Caco-2 (cell line): ENCODE measurements at regions of chr13 and their contacts with region 1.

Region 1: GRCh38 chr13:102555917-102556553 is 40.8 kb upstream of the TPP2 start:
- DNase-seq: peak in 1 of 2 experiments; percentile 42
- H3K4me3 ChIP-seq: no peak overlapping the region
- H3K4me3 Mint-ChIP-seq: no peak overlapping the region
- H3K27ac Mint-ChIP-seq: no peak overlapping the region
- H3K4me1 ChIP-seq: no peaks in the 10 kb centered on the region
- H3K4me1 Mint-ChIP-seq: peaks cover 6% of the 10 kb centered on the region
- H3K27me3 ChIP-seq: no peaks in the 10 kb centered on the region
- H3K27me3 Mint-ChIP-seq: peaks cover 6% of the 10 kb centered on the region
- CTCF ChIP-seq: peak; percentile 53 to 56

Region 2: GRCh38 chr13:101785858-101786257 is 770.2 kb before region 1 on chr13:
- CTCF ChIA-PET with region 1: no interaction called
- POLR2A ChIA-PET with region 1: no interaction called
- intact Hi-C with region 1: loop called (anchors 5 kb)
- DNase-seq: peak; percentile 40 to 49
- H3K4me3 ChIP-seq: no peak overlapping the region
- H3K4me3 Mint-ChIP-seq: no peak overlapping the region
- H3K27ac Mint-ChIP-seq: no peak overlapping the region
- H3K4me1 ChIP-seq: no peaks in the 10 kb centered on the region
- H3K4me1 Mint-ChIP-seq: no peaks in the 10 kb centered on the region
- H3K27me3 ChIP-seq: no peaks in the 10 kb centered on the region
- H3K27me3 Mint-ChIP-seq: peaks cover 9% of the 10 kb centered on the region
- CTCF ChIP-seq: peak; percentile 47 to 48

Region 3: GRCh38 chr13:101942038-101942437 is 614.0 kb before region 1 on chr13:
- CTCF ChIA-PET with region 1: no interaction called
- POLR2A ChIA-PET with region 1: no interaction called
- intact Hi-C with region 1: loop called (anchors 1 kb)
- DNase-seq: peak in 1 of 2 experiments; percentile 39
- H3K4me3 ChIP-seq: no peak overlapping the region
- H3K4me3 Mint-ChIP-seq: no peak overlapping the region
- H3K27ac Mint-ChIP-seq: no peak overlapping the region
- H3K4me1 ChIP-seq: no peaks in the 10 kb centered on the region
- H3K4me1 Mint-ChIP-seq: no peaks in the 10 kb centered on the region
- H3K27me3 ChIP-seq: no peaks in the 10 kb centered on the region
- H3K27me3 Mint-ChIP-seq: peaks cover 3% of the 10 kb centered on the region
- CTCF ChIP-seq: peak; percentile 30 to 78

Region 4: GRCh38 chr13:102141625-102142472 is 414.2 kb before region 1 on chr13:
- CTCF ChIA-PET with region 1: interaction called, 10 read pairs
- POLR2A ChIA-PET with region 1: no interaction called
- intact Hi-C with region 1: loop called (anchors 1 kb)
- DNase-seq: peak in 1 of 2 experiments; percentile 5
- H3K4me3 ChIP-seq: no peak overlapping the region
- H3K4me3 Mint-ChIP-seq: no peak overlapping the region
- H3K27ac Mint-ChIP-seq: no peak overlapping the region
- H3K4me1 ChIP-seq: no peaks in the 10 kb centered on the region
- H3K4me1 Mint-ChIP-seq: no peaks in the 10 kb centered on the region
- H3K27me3 ChIP-seq: no peaks in the 10 kb centered on the region
- H3K27me3 Mint-ChIP-seq: peaks cover 2% of the 10 kb centered on the region
- CTCF ChIP-seq: peak; percentile 69 to 80

Region 5: DNA sequence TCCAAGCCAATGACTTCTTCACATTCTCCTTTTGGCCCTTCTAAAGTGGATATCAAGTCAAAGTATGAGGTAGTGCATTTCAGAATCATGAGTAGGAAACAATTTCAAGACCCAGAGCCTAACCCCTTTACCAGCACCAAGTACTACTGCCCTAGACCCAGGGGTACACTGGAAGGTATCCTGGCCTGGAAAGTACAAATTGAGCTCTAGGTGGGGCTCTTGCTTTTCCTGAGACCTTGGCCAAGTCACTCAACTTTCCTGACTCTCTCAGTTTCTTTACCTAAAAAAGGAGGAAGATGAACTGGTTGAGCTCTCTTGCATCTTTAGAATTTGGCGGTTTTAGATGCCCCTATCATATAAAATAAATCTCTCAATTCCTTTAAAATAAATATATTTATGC is 358.8 kb before region 1 on chr13:
- CTCF ChIA-PET with region 1: interaction called, 5 read pairs
- POLR2A ChIA-PET with region 1: no interaction called
- intact Hi-C with region 1: loop called (anchors 1 kb)
- DNase-seq: peak in 1 of 2 experiments; percentile 34
- H3K4me3 ChIP-seq: no peak overlapping the region
- H3K4me3 Mint-ChIP-seq: no peak overlapping the region
- H3K27ac Mint-ChIP-seq: no peak overlapping the region
- H3K4me1 ChIP-seq: no peaks in the 10 kb centered on the region
- H3K4me1 Mint-ChIP-seq: no peaks in the 10 kb centered on the region
- H3K27me3 ChIP-seq: no peaks in the 10 kb centered on the region
- H3K27me3 Mint-ChIP-seq: peaks cover 5% of the 10 kb centered on the region
- CTCF ChIP-seq: peak in 1 of 2 experiments; percentile 27